IMR-90 (cell line): ENCODE measurements at regions of chr20 and their contacts with region 1.

Region 1: DNA sequence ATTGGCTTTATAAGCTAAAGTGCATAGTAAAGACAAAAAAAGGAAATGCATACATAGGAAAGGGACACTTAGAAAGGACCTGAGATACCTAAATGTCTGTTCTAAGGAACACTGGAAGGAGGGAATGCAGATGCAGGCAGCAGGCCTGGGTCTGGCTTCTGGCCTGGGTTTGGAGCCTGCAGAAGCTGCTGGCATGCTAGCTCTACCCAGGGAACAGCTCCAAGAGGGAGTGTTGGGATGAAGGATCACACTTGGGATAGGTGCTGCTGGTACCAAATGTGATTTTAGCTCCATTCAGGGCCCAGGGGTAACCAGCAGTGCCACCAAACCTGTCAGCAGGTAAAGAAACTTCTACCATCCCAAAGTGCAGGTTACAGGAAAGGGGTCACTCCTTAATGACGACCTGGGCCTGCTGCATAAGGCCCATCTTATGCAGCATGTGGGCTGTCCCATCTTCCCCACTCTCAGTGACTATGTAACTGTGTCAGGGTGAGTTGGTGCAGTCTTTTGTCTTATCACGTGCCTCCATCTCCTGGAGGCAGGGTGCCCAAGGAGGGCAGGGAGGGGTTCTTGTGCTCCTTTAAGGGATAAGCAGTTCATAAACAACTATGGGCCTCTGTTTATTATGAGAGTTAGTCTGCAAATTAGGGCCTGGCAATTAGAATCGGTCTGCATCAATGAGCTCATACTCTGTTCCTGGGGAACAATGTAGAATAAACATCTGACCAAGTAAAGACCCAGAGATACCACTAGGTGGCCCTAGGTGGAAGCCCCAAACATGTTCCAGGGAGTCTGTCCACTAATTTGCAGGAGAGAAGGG is 26.9 kb downstream of the DDX27 start:
- DNase-seq: peak; percentile 55
- ATAC-seq: peak; percentile 95
- H3K4me3 ChIP-seq: no peak overlapping the region
- H3K27ac ChIP-seq: peak overlapping the region; percentile 11; the same call in 1 of the 2 replicates
- H3K4me1 ChIP-seq: peaks cover 3% of the 10 kb centered on the region; the same call in 1 of the 2 replicates
- H3K27me3 ChIP-seq: no peaks in the 10 kb centered on the region
- CTCF ChIP-seq: peak; percentile 72
- POLR2A ChIP-seq: no peak
- RAD21 ChIP-seq: peak; percentile 57

Region 2: DNA sequence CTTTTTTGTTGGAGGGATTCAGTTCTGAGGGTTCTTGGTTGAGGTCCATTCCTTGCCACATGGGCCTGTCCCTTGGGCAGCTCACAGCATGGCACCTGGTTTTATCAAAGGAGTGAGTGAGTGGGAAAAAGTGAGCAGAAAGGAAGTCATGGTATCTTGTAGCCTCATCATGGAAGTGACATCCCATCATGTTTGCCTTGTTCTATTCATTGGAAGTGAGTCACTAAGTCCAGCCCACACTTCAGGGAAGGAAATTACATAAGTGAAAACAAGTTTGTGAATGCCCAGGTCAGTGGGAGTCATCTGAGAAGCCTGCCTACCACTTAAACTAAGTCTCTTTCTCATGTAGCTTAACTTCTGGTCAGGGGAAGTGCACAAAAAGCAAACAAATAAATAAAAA is 64.6 kb after region 1 on chr20:
- CTCF ChIA-PET with region 1: no interaction called
- POLR2A ChIA-PET with region 1: no interaction called
- dilution Hi-C with region 1: no loop called
- in situ Hi-C with region 1: no loop called
- intact Hi-C with region 1: no loop called
- DNase-seq: peak; percentile 19
- ATAC-seq: no peak
- H3K4me3 ChIP-seq: no peak overlapping the region
- H3K27ac ChIP-seq: no peak overlapping the region
- H3K4me1 ChIP-seq: no peaks in the 10 kb centered on the region
- H3K27me3 ChIP-seq: peaks cover 46% of the 10 kb centered on the region
- CTCF ChIP-seq: no peak
- POLR2A ChIP-seq: no peak
- RAD21 ChIP-seq: no peak

Region 3: GRCh38 chr20:49323622-49324238 is 77.6 kb after region 1 on chr20:
- CTCF ChIA-PET with region 1: interaction called, 7 read pairs
- POLR2A ChIA-PET with region 1: no interaction called
- dilution Hi-C with region 1: no loop called
- in situ Hi-C with region 1: no loop called
- intact Hi-C with region 1: loop called (anchors 1 kb)
- DNase-seq: peak; percentile 74
- ATAC-seq: peak; percentile 88
- H3K4me3 ChIP-seq: no peak overlapping the region
- H3K27ac ChIP-seq: no peak overlapping the region
- H3K4me1 ChIP-seq: peaks cover 4% of the 10 kb centered on the region; the same call in 1 of the 2 replicates
- H3K27me3 ChIP-seq: peaks cover 60% of the 10 kb centered on the region
- CTCF ChIP-seq: peak; percentile 54
- POLR2A ChIP-seq: no peak
- RAD21 ChIP-seq: peak; percentile 51